HCT116 (cell line): ENCODE measurements at regions of chr5 and their contacts with region 1.

Region 1: GRCh38 chr5:68730359-68731300 is 363.2 kb upstream of the SLC30A5 start:
- DNase-seq: no peak
- ATAC-seq: no peak
- H3K4me3 ChIP-seq: no peak overlapping the region
- H3K27ac ChIP-seq: no peak overlapping the region
- H3K4me1 ChIP-seq: no peaks in the 10 kb centered on the region
- H3K27me3 ChIP-seq: no peaks in the 10 kb centered on the region
- CTCF ChIP-seq: no peak
- POLR2A ChIP-seq: no peak
- RAD21 ChIP-seq: no peak

Region 2: GRCh38 chr5:68778484-68778883 is 47.9 kb after region 1 on chr5:
- CTCF ChIA-PET with region 1: no interaction called
- POLR2A ChIA-PET with region 1: no interaction called
- RAD21 ChIA-PET with region 1: no interaction called
- intact Hi-C with region 1: loop called (anchors 5 kb)
- DNase-seq: no peak
- ATAC-seq: no peak
- H3K4me3 ChIP-seq: no peak overlapping the region
- H3K27ac ChIP-seq: no peak overlapping the region
- H3K4me1 ChIP-seq: no peaks in the 10 kb centered on the region
- H3K27me3 ChIP-seq: no peaks in the 10 kb centered on the region
- CTCF ChIP-seq: no peak
- POLR2A ChIP-seq: no peak
- RAD21 ChIP-seq: no peak

Region 3: DNA sequence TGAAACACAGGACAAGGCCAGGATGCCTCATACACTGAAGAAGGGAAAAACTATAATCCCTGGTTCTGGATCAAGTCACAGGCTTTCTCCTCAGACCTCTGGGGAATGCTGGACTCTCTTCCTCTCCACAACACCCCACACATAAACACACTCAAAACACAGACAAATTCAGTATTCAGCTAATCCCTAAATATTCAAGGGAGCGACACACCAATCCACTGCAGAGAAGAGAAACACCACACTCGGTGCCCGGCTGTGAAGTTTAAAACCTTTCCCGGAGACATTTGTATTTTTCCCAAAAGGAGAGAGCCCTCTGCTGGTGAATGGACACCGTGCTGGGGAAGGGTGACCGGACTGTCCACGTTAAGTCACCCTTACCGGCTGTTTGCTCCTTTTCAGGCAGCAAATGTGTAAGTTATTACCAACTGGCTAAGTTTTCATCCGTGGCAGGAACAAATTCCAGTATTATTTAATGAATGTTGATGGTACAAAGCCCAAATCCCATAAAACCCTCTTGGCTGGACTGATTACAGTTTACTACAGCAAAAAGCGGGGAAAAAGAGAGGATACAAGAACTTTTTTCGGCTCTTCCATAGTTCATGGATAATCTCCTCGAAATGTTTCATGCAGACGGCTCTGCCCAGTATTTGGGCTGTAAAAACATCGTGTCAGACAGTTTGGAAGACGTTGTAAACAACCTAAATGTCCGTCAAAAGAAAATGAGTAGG is 232.3 kb after region 1 on chr5:
- CTCF ChIA-PET with region 1: no interaction called
- POLR2A ChIA-PET with region 1: no interaction called
- RAD21 ChIA-PET with region 1: no interaction called
- intact Hi-C with region 1: no loop called
- DNase-seq: peak; percentile 53
- ATAC-seq: peak; percentile 96
- H3K4me3 ChIP-seq: no peak overlapping the region
- H3K27ac ChIP-seq: no peak overlapping the region
- H3K4me1 ChIP-seq: peaks cover 0 to 8% of the 10 kb centered on the region in 2 experiments; a peak in 2 of 4 replicates
- H3K27me3 ChIP-seq: no peaks in the 10 kb centered on the region
- CTCF ChIP-seq: peak; percentile 75 to 90 (median 89); a peak in 5 of 6 replicates
- POLR2A ChIP-seq: no peak
- RAD21 ChIP-seq: peak; percentile 85